ENCODE measurements at regions of chr2 and their contacts with region 1.

Region 1: GRCh38 chr2:220687231-220687843 is 884.8 kb downstream of the EPHA4 start:
- DNase-seq: peak; percentile 72 to 83 (median 76)
- ATAC-seq: peak; percentile 83 to 88
- H3K4me3 ChIP-seq: no peak overlapping the region
- H3K27ac ChIP-seq: no peak overlapping the region
- H3K4me1 ChIP-seq: no peaks in the 10 kb centered on the region
- H3K27me3 ChIP-seq: no peaks in the 10 kb centered on the region

Region 2: DNA sequence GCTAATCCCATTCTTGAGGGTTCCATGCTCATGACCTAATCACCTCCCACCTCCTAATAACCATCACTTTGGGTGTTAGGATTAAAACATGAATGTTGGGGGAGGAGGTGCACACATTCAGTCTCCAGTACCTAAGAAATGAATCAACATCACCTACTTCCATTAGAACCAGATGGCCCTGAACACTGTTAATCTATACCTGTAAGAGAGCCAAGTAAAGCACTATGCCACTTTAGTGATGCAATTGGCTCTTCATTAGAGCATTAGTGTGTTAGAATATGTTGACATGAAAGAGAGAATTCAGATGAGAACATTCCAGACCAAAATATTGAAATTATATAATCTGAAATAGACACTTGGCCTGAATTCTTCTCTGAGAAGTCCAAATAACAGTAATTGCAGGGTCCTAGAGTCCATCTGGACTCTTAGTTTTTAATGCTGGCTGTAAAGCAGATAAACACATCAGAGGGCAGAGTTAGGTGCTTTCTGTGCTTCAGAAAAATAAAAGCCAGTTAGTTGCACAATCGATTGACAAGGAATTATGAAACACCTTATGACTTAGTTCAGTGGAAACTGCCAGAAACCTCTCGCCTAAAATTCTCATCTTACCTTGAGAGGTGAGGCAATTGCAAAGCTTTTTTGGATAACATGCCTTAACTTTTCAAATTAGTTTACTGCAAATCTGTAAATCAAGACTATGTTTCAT is 136.2 kb before region 1 on chr2:
- intact Hi-C with region 1: no loop called
- DNase-seq: no peak
- ATAC-seq: no peak
- H3K4me3 ChIP-seq: no peak overlapping the region
- H3K27ac ChIP-seq: no peak overlapping the region
- H3K4me1 ChIP-seq: no peaks in the 10 kb centered on the region
- H3K27me3 ChIP-seq: no peaks in the 10 kb centered on the region

Region 3: GRCh38 chr2:220748875-220749479 is 61.6 kb after region 1 on chr2:
- intact Hi-C with region 1: no loop called
- DNase-seq: no peak
- ATAC-seq: no peak
- H3K4me3 ChIP-seq: no peak overlapping the region
- H3K27ac ChIP-seq: no peak overlapping the region
- H3K4me1 ChIP-seq: no peaks in the 10 kb centered on the region
- H3K27me3 ChIP-seq: no peaks in the 10 kb centered on the region

Region 4: GRCh38 chr2:220959391-220959802 is 272.1 kb after region 1 on chr2:
- intact Hi-C with region 1: loop called in 1 of 4 experiments (anchors 10 kb)
- DNase-seq: peak; percentile 36 to 88 (median 76)
- ATAC-seq: peak; percentile 90
- H3K4me3 ChIP-seq: no peak overlapping the region
- H3K27ac ChIP-seq: peak overlapping the region; percentile 72
- H3K4me1 ChIP-seq: peaks cover 5% of the 10 kb centered on the region
- H3K27me3 ChIP-seq: no peaks in the 10 kb centered on the region

Region 5: DNA sequence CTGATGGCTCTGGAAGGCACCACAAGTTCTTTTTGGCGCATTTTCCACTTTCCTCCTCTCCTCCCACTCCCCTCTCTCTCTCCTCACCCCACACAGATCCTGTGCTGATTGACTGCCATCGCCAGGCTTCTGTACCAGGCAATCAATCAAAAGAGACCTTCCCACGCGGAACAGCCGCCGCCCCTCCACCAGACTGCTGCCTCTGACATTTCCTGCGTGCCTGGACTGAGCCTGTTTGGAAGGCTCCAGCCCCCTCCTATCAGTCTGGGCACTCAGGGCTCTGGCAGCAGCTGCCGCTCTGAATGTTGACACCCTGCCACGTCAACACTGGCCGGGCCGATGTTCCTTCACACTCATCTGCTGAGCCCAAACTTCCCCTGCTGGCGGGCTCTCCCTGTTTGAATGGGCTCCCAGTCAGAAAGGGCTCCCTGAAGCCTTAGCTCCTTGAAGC is 417.0 kb after region 1 on chr2:
- intact Hi-C with region 1: loop called in 1 of 4 experiments (anchors 10 kb)
- DNase-seq: peak; percentile 88 to 95 (median 93)
- ATAC-seq: peak; percentile 98
- H3K4me3 ChIP-seq: no peak overlapping the region
- H3K27ac ChIP-seq: peak overlapping the region; percentile 67
- H3K4me1 ChIP-seq: peaks cover 9% of the 10 kb centered on the region
- H3K27me3 ChIP-seq: no peaks in the 10 kb centered on the region

Region 6: DNA sequence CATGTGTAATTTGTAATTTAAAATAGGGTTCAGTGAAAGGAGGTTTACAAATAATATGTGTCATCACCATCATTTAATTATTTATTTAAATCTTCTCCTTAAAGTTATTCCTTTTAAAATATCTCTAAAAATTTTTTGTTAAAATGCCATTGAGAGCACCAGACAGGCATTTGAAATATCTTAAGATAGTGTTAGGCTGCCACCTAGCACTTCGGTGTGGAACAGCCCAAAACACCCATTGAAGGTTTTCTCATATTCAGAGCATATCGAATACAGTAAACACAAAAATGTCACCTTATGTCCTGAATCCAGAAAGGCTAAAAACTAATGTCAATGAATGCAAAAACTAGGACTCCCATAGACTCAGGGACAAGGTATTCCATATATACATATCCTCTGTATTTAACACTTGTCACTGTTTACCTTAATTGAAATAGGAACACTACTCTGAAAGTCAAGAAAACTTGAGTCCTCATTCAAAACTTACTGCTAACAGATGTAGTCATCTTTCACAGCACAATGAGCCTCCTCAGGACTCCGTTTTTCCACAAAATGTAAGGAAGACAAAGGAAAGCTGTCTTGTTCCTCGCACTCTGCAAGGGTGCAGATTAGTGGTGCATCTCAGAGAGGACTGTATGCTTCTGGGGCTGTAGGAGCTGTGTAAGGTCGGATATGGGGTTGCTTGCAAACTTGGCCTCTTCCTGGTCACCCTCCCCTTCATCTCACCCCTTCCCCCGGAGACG is 1281.9 kb after region 1 on chr2:
- intact Hi-C with region 1: loop called in 1 of 4 experiments (anchors 10 kb)
- DNase-seq: no peak
- ATAC-seq: peak in 1 of 2 donors; percentile 48
- H3K4me3 ChIP-seq: no peak overlapping the region
- H3K27ac ChIP-seq: no peak overlapping the region
- H3K4me1 ChIP-seq: no peaks in the 10 kb centered on the region
- H3K27me3 ChIP-seq: peaks cover 4% of the 10 kb centered on the region

Measured in right cardiac atrium (tissue), 5 donors.